Activated CD8-positive, alpha-beta memory T cell treated with anti-CD3 and anti-CD28 coated beads, Interleukin-2, amount 10 ng/mL, durations not matched to agents 7 days and 5 days (primary cell): ENCODE measurements at regions of chr6 and their contacts with region 1.

Region 1: DNA sequence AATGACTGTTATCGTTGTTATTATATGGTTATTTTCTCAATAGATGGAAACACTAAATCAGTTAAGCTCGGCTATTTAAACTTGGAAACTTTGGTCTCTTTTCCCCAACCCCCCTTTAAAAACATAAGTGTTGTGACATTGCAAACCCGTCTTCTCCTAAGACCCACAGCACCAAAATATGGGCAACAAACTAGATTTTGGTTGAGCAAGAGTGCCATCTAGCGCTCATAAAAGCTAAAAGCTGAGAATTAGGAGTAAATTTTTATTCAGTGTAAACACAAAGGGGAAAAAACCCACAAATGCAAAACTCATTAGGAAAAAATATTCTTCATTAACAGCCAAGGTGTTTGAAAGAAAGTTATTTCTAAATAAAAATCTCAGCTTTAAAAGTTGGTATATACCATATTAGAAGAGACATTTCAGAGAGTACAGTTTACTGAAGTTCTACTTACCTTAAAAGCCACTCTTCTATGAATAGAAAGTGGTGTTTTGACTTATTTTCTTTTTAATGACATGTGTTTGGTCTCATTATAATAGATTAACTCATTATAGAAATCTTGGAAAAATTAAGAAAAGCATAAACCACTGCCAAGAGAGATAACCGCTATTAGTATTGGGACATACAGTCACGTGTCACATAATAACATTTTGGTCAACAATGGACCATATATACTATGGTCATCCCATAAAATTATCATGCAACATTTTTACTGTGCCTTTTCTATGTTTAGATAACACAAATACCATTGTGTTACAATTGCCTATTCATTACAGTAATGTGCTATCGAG is 21.1 kb downstream of the SESN1 start:
- DNase-seq: peak; percentile 63
- ATAC-seq: peak; percentile 69
- H3K4me3 Mint-ChIP-seq: no peak overlapping the region
- H3K27ac Mint-ChIP-seq: no peak overlapping the region
- H3K4me1 Mint-ChIP-seq: peaks cover 32% of the 10 kb centered on the region
- H3K27me3 Mint-ChIP-seq: no peaks in the 10 kb centered on the region

Region 2: DNA sequence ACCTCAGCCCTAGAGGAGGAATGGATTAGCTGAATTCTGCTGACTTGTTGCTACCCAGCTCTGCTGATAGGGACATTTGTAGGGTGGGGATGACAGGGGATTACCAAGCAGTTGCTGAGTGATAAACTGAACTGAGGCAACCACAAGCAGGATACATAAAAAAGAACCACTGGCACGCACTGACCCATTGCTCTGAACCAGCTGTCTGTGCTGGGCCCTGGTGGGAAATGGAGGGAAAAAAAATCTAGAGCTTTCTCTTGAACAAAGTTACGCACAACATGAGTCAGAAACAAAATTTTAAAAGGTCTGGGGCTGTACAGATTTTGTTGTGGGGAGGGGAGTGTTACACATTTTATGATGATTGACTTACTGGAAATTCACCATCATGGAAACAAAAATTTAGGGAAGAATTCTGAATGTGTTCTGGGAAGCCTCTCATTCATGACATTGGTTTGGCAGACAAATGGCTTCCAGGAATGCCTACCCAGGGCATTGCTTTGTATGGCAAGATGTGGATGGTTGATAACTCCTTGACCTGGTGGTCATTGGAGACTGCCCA is 475.2 kb before region 1 on chr6:
- CTCF ChIA-PET with region 1: no interaction called
- DNase-seq: peak; percentile 63
- ATAC-seq: peak; percentile 85
- H3K4me3 Mint-ChIP-seq: no peak overlapping the region
- H3K27ac Mint-ChIP-seq: peak overlapping the region; percentile 50
- H3K4me1 Mint-ChIP-seq: peaks cover 37% of the 10 kb centered on the region
- H3K27me3 Mint-ChIP-seq: no peaks in the 10 kb centered on the region

Region 3: GRCh38 chr6:108835218-108835850 is 238.2 kb before region 1 on chr6:
- CTCF ChIA-PET with region 1: interaction called, 15 read pairs
- DNase-seq: peak; percentile 92
- ATAC-seq: peak; percentile 93
- H3K4me3 Mint-ChIP-seq: no peak overlapping the region
- H3K27ac Mint-ChIP-seq: peak overlapping the region; percentile 48
- H3K4me1 Mint-ChIP-seq: peaks cover 50% of the 10 kb centered on the region
- H3K27me3 Mint-ChIP-seq: no peaks in the 10 kb centered on the region

Region 4: GRCh38 chr6:108914235-108915022 is 159.1 kb before region 1 on chr6:
- CTCF ChIA-PET with region 1: interaction called, 25 read pairs
- DNase-seq: peak; percentile 55
- ATAC-seq: no peak
- H3K4me3 Mint-ChIP-seq: no peak overlapping the region
- H3K27ac Mint-ChIP-seq: no peak overlapping the region
- H3K4me1 Mint-ChIP-seq: peaks cover 21% of the 10 kb centered on the region
- H3K27me3 Mint-ChIP-seq: peaks cover 57% of the 10 kb centered on the region

Region 5: DNA sequence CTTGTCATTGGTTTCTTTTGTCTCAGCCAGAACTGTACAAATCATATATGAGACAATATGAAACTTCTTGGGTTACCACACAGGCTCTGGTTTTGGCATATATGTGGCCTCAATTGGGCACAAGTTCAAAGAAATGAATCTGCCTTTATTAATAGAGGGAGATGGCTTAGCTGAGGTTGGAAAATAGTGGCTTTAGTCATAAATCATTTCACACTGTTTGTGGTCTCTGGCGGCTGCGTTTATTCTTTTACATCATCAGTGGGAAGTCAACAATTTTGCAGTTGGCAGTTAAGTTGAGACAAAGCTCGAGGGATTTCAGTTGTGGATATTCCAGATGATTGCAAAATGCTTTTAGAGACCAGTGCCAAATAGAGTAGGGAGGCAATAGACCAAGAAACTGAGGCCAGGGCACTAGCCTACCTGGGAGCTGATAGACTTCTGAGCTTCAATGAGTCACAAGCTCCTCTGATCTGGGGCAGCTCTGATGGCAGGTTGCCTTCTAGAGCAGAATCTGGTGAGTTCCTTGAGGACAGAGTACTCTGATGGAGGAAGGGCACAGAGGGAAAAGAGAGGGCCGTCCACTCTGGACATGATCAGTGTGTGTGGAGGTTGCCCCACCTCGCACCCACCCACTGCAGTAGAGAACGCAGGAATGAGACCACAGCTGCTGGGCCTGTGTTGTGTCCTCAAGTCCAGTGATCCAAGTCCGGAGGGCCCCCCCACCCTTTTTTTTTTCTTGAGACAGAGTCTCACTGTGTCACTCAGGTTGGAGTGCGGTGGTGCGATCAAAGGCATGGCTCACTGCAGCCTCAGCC is 151.8 kb before region 1 on chr6:
- CTCF ChIA-PET with region 1: interaction called, 25 read pairs
- DNase-seq: peak; percentile 86
- ATAC-seq: peak; percentile 84
- H3K4me3 Mint-ChIP-seq: peak overlapping the region; percentile 41
- H3K27ac Mint-ChIP-seq: peak overlapping the region; percentile 69
- H3K4me1 Mint-ChIP-seq: peaks cover 48% of the 10 kb centered on the region
- H3K27me3 Mint-ChIP-seq: peaks cover 85% of the 10 kb centered on the region

Region 6: DNA sequence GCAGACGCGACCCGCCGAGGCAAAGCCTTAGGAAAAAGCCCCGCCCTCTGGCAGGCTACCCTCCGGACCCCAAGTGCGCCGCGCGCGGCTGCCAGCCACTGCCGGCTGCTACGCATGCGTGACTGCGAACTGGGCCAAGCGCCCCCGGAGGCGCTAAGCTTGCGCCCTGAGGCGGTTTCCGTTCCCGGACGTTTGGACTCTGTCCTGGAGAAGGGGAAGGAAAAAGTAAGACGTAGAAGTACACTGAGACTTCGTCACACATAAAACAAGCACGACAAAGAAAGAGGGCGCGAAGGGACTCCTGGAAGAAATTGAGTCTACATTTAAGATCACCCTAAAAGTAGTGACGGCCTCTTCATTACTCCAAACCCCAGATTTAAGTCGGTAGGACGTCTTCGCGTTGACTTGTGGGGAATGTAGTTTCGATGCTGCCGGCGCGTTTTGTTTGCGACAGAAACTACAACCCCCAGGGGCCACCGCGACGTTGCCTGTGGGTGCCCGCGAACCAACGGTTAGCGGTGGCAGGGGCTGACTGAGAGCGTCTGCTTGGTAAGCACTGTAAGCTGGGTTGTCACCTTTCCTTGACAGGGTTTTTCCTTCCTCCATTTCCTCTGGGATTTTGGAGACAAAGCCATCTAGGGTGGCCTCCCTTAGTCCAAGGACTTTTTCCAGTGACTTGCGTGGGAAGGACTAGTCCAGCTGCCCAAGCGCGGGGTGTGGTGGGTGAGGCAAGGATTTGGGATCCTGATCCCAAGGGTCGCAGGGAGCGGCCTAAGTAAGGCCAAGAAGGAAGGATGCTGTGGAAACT is 21.7 kb after region 1 on chr6 and contains the start of gene CEP57L1:
- CTCF ChIA-PET with region 1: interaction called, 16 read pairs
- DNase-seq: peak; percentile 98
- ATAC-seq: peak; percentile 78
- H3K4me3 Mint-ChIP-seq: peak within 1 kb of the TSS; percentile 94
- H3K27ac Mint-ChIP-seq: peak within 1 kb of the TSS; percentile 98
- H3K4me1 Mint-ChIP-seq: peaks cover 49% of the 10 kb centered on the region
- H3K27me3 Mint-ChIP-seq: no peaks in the 10 kb centered on the region
- total RNA-seq, gene CEP57L1: 23.9 to 25.5 TPM

Region 7: DNA sequence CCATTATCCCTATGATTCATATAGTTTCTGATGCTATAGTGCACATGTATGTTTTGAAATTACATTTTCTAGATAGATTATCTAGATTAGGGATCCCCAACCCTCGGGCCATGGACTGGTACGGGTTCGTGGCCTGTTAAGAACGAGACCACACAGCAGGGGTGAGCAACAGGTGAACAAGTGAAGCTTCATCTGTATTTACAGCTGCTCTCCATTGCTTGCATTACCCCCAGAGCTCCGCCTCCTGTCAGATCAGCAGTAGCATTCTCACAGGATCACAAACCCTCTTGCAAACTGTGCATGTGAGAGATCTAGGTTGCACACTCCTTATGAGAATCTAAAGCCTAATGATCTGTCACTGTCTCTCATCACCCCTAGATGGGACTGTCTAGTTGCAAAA is 32.1 kb after region 1 on chr6:
- CTCF ChIA-PET with region 1: no interaction called
- DNase-seq: no peak
- ATAC-seq: no peak
- H3K4me3 Mint-ChIP-seq: no peak overlapping the region
- H3K27ac Mint-ChIP-seq: no peak overlapping the region
- H3K4me1 Mint-ChIP-seq: peaks cover 10% of the 10 kb centered on the region
- H3K27me3 Mint-ChIP-seq: no peaks in the 10 kb centered on the region

Region 8: GRCh38 chr6:109472132-109472995 is 398.8 kb after region 1 on chr6:
- CTCF ChIA-PET with region 1: no interaction called
- DNase-seq: no peak
- ATAC-seq: peak; percentile 45
- H3K4me3 Mint-ChIP-seq: no peak overlapping the region
- H3K27ac Mint-ChIP-seq: peak overlapping the region; percentile 65
- H3K4me1 Mint-ChIP-seq: peaks cover 66% of the 10 kb centered on the region
- H3K27me3 Mint-ChIP-seq: no peaks in the 10 kb centered on the region